ENCODE measurements at regions of chr11 and their contacts with region 1.

Region 1: DNA sequence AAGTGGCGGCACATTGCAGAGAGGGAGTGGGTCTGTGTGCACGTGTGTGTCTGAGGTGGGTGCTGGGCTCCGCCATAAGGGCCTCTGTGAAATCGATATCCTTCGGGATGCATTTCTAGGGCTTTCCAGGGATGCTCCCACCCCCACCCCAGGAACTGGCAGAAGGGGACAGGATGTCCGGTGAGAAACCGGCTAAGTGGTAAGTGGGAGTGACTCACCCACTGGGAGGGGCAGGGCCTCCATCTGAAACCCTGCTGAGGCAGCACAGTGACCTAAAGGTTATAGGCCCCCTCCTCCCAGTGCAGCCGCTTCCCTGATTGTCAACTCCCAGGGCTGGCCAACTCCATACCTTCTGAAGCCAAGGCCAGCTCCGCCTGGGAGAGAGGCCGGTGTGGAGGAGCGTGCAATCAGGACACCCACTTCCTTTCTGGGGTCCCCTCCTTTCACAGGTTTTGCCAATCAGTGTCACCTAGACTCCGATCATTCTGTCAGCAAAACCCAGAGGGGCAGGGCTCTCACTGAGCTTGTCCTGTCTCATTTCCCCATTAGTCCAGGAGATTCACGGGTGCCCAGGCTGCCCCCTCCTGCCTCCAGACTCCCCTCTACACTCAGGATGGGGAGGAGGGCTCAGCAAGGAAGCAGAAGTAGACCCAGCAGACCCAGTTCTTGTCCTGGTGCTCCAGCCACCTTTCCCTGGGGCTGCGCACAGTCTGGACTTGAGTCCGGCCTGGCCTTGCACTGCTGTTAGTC is 44.5 kb downstream of the NECTIN1 start:
- DNase-seq: no peak
- H3K4me3 ChIP-seq: no peak overlapping the region
- H3K27ac ChIP-seq: no peak overlapping the region
- H3K4me1 ChIP-seq: peaks cover 9 to 45% (median 32%) of the 10 kb centered on the region in 4 experiments
- H3K27me3 ChIP-seq: no peaks in the 10 kb centered on the region
- CTCF ChIP-seq: no peak
- EP300 ChIP-seq: no peak
- POLR2A ChIP-seq: no peak
- RAD21 ChIP-seq: no peak

Region 2: DNA sequence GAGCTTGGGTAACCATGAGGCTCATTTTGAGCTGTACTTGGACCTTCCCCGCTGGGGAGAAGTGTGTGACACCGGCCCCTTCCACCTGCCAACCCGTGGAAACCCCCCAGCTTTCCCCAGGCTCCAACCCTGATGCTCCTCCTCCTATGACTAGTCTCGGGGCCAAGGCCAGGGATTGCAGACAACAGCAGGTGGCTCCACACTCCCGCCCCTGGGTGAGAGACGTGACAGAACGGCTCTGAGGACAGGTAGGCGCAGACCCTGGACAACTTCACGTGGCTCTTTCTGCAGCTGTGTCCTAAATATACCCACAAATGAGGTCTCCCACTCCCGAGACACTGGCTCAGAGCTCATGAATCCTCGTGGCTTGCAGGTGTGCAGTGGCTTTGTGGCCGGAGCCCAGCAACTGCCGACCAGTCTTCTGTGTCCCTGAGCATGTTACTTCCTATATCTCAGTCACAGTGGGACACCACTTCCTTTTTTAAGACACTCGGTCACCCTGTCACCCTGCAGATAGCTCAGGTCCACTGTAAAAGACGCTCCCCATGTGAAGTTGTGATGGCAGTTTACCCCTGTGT is 10.7 kb before region 1 on chr11:
- CTCF ChIA-PET with region 1: interaction called, 17 read pairs
- POLR2A ChIA-PET with region 1: no interaction called
- DNase-seq: no peak
- H3K4me3 ChIP-seq: no peak overlapping the region
- H3K27ac ChIP-seq: no peak overlapping the region
- H3K4me1 ChIP-seq: no peaks in the 10 kb centered on the region; a peak in 3 of 7 replicates
- H3K27me3 ChIP-seq: no peaks in the 10 kb centered on the region
- CTCF ChIP-seq: no peak
- EP300 ChIP-seq: no peak
- POLR2A ChIP-seq: no peak
- RAD21 ChIP-seq: no peak

Region 3: DNA sequence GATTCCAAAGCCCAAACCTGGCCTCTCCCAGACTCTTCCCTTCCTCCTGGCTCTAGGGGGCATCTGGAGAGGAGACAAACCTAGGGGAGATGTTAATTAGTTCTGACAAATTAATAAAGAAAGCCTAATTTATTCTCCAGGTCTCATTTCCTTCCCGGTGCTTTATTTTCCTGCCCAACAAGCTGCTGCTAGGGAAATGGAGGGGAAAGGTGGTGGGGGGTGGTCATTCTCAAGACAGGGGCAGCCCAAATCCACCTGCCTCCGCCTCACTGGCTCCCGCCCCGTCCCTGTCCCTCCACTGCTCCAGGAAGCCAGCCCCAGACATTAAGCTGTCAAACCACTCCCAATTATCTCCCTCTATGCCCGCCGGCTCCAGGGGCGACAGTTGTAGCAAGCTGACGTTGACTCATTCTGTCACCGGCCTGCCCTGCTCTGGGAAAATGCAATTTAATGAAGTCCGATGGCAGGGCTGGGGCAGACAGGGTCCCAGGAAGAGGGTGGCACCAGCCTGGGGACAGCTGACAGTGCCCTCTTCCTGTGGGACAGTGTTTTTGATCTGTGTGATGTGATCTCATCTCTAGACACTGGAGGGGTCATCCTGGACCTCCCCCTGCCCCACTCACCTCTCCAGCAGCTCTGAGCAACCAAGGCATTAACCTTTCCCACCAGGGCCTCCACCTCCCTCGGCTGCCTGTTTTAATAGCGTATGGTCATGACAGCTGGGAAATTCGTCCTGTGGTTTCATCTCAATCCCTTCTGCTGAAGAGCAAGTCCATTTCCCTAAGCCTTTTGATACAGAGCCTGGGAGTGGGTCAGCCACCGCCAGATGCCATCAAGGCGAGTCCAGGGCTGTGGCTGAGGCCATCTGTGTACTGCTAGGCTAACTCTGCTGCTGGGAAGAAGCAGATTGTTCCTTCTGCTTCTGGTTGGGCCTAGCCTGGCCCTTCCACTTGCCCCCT is 17.3 kb after region 1 on chr11:
- CTCF ChIA-PET with region 1: interaction called, 110 read pairs
- POLR2A ChIA-PET with region 1: interaction called, 3 read pairs
- DNase-seq: no peak
- H3K4me3 ChIP-seq: no peak overlapping the region
- H3K27ac ChIP-seq: no peak overlapping the region
- H3K4me1 ChIP-seq: peaks cover under 1 to 11% (median 5%) of the 10 kb centered on the region in 4 experiments
- H3K27me3 ChIP-seq: no peaks in the 10 kb centered on the region
- CTCF ChIP-seq: no peak
- EP300 ChIP-seq: no peak
- POLR2A ChIP-seq: no peak
- RAD21 ChIP-seq: no peak

Region 4: GRCh38 chr11:119721129-119722120 is 36.9 kb after region 1 on chr11:
- CTCF ChIA-PET with region 1: interaction called, 12 read pairs
- POLR2A ChIA-PET with region 1: interaction called, 4 read pairs
- DNase-seq: peak in 1 of 2 experiments; percentile 77
- H3K4me3 ChIP-seq: no peak overlapping the region
- H3K27ac ChIP-seq: no peak overlapping the region
- H3K4me1 ChIP-seq: peaks cover 22 to 64% (median 41%) of the 10 kb centered on the region in 4 experiments
- H3K27me3 ChIP-seq: no peaks in the 10 kb centered on the region
- CTCF ChIP-seq: peak; percentile 64 to 87 (median 82)
- EP300 ChIP-seq: no peak
- POLR2A ChIP-seq: no peak
- RAD21 ChIP-seq: peak; percentile 45 to 57